ENCODE measurements at regions of chr17 and their contacts with region 1.

Region 1: GRCh38 chr17:43316522-43317142 is 82.2 kb upstream of the ARL4D start:
- DNase-seq: no peak
- ATAC-seq: no peak
- H3K4me3 ChIP-seq: no peak overlapping the region
- H3K27ac ChIP-seq: no peak overlapping the region
- H3K4me1 ChIP-seq: no peaks in the 10 kb centered on the region; the same call in 1 of the 2 replicates
- H3K27me3 ChIP-seq: no peaks in the 10 kb centered on the region
- CTCF ChIP-seq: no peak

Region 2: GRCh38 chr17:41825175-41825845 is 1491.3 kb before region 1 on chr17:
- CTCF ChIA-PET with region 1: no interaction called
- POLR2A ChIA-PET with region 1: interaction called, 20 read pairs
- in situ Hi-C with region 1: no loop called
- intact Hi-C with region 1: no loop called
- DNase-seq: no peak
- ATAC-seq: no peak
- H3K4me3 ChIP-seq: no peak overlapping the region
- H3K27ac ChIP-seq: no peak overlapping the region
- H3K4me1 ChIP-seq: no peaks in the 10 kb centered on the region; the same call in 1 of the 2 replicates
- H3K27me3 ChIP-seq: no peaks in the 10 kb centered on the region
- CTCF ChIP-seq: no peak

Region 3: GRCh38 chr17:42806249-42806648 is 510.4 kb before region 1 on chr17:
- CTCF ChIA-PET with region 1: no interaction called
- POLR2A ChIA-PET with region 1: interaction called, 12 read pairs
- in situ Hi-C with region 1: no loop called
- intact Hi-C with region 1: no loop called
- DNase-seq: no peak
- ATAC-seq: no peak
- H3K4me3 ChIP-seq: no peak overlapping the region
- H3K27ac ChIP-seq: no peak overlapping the region
- H3K4me1 ChIP-seq: peaks cover 10% of the 10 kb centered on the region
- H3K27me3 ChIP-seq: no peaks in the 10 kb centered on the region
- CTCF ChIP-seq: no peak

Region 4: DNA sequence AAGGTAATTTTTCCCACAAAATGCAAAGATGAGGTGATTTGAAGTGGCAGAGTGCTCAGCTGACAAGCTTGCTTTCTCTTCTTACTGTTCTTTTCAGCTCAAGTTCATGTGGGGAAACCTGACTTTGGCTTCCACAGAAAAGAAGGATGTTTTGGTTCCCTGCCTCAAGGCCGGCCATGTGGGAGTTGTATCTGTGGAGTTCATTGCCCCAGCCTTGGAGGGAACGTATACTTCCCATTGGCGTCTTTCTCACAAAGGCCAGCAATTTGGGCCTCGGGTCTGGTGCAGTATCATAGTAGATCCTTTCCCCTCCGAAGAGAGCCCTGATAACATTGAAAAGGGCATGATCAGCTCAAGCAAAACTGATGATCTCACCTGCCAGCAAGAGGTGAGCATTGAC is 123.4 kb before region 1 on chr17:
- CTCF ChIA-PET with region 1: no interaction called
- POLR2A ChIA-PET with region 1: interaction called, 14 read pairs
- in situ Hi-C with region 1: no loop called
- intact Hi-C with region 1: no loop called
- DNase-seq: no peak
- ATAC-seq: no peak
- H3K4me3 ChIP-seq: no peak overlapping the region
- H3K27ac ChIP-seq: no peak overlapping the region
- H3K4me1 ChIP-seq: no peaks in the 10 kb centered on the region
- H3K27me3 ChIP-seq: no peaks in the 10 kb centered on the region
- CTCF ChIP-seq: no peak

Measured in Panc1 (cell line).